ENCODE measurements at regions of chrX and their contacts with region 1.

Region 1: DNA sequence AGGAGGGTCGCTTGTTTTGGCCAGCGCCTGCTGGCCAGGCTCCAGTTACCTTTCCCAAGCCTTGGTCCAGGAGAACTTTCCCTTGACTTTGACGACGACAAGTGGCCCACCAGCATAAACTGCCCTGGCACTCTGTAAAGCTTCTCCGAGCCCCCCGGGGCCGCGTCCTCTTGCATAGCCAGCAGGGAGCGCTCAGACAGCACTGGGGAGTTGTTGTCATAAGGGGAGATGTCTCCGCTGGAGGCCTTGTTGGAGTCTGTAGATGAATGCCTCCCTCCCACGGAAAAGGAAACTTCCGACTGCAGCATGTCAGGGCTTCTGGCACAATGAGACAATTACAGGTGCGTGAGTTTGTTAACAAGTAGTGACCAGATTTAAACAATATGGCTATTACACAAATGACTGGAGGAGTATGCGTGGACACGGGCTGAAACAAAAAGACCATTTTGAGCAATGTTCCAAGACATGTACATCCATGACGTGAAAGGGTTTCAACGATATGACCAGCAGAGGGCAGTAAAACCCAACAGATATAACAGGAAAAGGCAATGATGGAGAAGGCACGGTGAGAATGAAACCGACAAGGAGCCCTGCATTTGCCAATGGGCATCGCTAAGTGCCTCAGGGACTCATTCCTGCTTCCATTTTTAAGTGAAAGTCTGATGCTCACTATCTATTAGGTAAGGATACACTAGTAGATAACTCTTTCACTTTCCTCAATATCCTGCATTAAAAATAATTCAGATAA is 33.0 kb downstream of the HCCS start:
- H3K4me3 Mint-ChIP-seq: no peak overlapping the region
- H3K27ac Mint-ChIP-seq: no peak overlapping the region
- H3K4me1 Mint-ChIP-seq: no peaks in the 10 kb centered on the region
- H3K27me3 Mint-ChIP-seq: peaks cover 11% of the 10 kb centered on the region

Region 2: DNA sequence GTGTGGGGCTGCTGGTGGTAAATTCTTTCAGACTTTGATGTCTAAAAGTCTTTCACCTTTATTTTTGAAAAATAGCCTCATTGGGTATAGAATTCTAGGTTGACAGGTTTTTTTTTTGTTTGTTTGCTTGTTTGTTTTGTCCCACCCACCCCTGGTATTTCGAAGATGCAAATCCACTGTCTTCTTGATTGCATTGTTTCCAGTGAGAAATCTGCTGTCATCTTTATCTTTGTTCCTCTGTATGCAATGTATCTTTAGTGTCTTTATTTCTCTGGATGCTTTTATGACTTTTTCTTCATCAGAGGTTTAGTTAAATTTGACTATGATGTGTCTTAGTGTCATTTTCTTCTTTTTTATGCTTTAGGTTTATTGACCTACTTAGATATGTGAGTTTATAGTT is 54.3 kb before region 1 on chrX:
- intact Hi-C with region 1: no loop called
- H3K4me3 Mint-ChIP-seq: no peak overlapping the region
- H3K27ac Mint-ChIP-seq: no peak overlapping the region
- H3K4me1 Mint-ChIP-seq: no peaks in the 10 kb centered on the region
- H3K27me3 Mint-ChIP-seq: no peaks in the 10 kb centered on the region

Region 3: DNA sequence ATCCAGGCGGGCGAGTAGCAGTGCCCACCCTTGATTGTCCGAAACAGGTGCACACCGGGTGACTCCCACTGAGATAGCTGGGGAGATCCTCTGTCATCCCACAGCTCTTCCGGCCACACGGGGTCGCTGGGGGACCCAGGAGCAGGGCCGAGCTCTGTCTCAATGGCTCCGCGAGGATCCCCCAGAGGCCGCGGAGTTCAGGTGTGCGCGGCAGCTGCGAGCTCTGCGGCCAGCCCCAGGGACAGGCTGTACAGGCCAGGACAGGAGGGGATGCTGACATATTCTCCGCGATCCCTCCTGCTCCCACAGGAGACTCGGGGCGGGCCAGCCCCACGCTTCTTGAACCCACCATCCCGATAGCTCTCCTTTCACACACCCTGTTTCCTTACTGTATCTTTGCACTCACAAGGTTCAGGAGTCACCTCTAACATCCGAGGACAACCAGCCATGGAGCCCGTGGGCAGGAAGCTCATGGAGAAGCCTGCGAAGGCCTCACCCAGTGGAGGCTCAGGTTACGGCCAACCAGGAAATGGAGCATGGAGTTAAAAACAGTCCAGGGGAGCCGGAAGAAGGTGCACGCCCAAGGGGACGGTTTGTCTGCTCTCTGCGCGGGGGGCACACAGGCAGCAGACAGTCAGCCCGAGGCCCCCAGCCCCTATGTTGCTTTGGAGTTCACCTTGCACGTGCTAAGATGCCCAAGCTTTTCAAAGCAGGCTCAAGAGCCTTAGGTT is 71.3 kb after region 1 on chrX:
- intact Hi-C with region 1: no loop called
- H3K4me3 Mint-ChIP-seq: no peak overlapping the region
- H3K27ac Mint-ChIP-seq: no peak overlapping the region
- H3K4me1 Mint-ChIP-seq: no peaks in the 10 kb centered on the region
- H3K27me3 Mint-ChIP-seq: no peaks in the 10 kb centered on the region

Region 4: GRCh38 chrX:11381464-11381863 is 237.4 kb after region 1 on chrX:
- intact Hi-C with region 1: loop called (anchors 10 kb)
- H3K4me3 Mint-ChIP-seq: no peak overlapping the region
- H3K27ac Mint-ChIP-seq: no peak overlapping the region
- H3K4me1 Mint-ChIP-seq: peaks cover 10% of the 10 kb centered on the region
- H3K27me3 Mint-ChIP-seq: no peaks in the 10 kb centered on the region

Region 5: DNA sequence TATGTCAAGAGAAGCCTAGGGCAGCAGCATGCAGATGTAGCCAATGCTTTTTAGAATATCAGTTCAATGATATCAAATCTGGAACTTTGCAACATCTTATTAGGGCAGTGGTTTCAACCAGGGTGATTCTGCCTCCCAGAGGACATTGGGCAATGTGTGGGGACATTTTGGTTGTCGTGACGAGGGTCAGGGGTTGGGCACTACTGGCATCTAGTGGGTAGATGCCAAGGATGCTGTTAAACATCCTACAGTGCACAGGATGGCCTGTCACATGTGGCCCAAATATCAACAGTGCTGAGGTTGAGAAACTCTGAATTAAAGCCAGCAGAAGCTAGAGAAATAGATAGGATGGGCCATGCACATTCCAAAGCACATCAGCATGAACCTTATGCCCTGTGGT is 301.4 kb after region 1 on chrX:
- intact Hi-C with region 1: loop called (anchors 5 kb)
- H3K4me3 Mint-ChIP-seq: no peak overlapping the region
- H3K27ac Mint-ChIP-seq: no peak overlapping the region
- H3K4me1 Mint-ChIP-seq: no peaks in the 10 kb centered on the region
- H3K27me3 Mint-ChIP-seq: peaks cover 3% of the 10 kb centered on the region

Region 6: DNA sequence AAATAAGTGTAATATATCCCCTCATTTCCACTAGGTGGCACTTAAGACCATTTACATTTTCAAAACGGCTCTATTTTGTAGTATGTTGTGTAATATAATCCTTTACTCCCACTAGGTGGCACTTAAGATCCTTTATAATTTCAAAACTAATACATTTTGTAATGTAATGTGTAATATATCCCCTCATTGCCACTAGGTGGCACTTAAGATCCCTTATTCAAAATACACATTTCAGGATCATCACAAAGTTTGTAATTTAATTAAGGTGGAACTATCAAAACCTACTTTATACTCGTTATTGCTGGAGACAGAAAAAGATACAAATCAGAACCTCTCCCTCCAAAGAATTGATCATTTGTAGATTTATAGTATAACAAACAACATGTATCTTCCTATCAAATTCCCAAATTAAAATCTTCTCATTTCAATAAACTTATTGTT is 389.1 kb after region 1 on chrX:
- intact Hi-C with region 1: loop called (anchors 2 kb)
- H3K4me3 Mint-ChIP-seq: no peak overlapping the region
- H3K27ac Mint-ChIP-seq: no peak overlapping the region
- H3K4me1 Mint-ChIP-seq: no peaks in the 10 kb centered on the region
- H3K27me3 Mint-ChIP-seq: peaks cover 2% of the 10 kb centered on the region

Measured in dendritic cell treated with granulocyte-macrophage colony-stimulating factor and Interleukin-4, amounts not matched to agents 40 ng/mL and 50 ng/mL, for 4 days (primary cell).